Gastrocnemius medialis (tissue), 4 donors: ENCODE measurements at regions of chr10 and their contacts with region 1.

Region 1: DNA sequence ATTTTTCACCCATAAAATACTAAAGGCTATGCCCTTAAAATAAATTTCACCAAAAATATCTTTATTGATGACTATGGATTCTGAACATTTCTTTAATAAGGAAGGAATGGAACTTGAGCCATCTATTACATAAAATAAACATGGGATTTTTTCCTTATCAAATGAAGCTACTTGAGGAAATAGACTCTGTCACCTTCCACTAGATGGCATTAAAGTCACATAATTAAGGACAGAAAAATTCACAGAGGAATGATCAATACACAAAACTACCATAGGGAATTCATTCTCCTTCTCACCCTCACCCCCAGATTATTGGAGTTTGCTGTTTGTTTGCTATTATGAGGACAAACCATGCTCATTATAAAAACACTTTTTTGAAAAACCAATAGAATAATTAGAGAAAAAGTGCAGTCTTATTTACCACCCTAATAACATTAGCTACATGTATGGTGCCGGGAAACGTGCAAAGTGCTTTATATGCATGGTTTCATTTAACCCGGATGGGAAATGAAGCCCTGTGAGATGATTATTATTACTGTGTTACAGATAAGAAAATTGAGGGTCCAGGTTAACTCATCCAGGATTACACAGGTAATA is 21.1 kb upstream of the FOXI2 start:
- DNase-seq: no peak
- ATAC-seq: no peak
- H3K4me3 ChIP-seq: no peak overlapping the region
- H3K27ac ChIP-seq: no peak overlapping the region
- H3K4me1 ChIP-seq: no peaks in the 10 kb centered on the region
- H3K27me3 ChIP-seq: no peaks in the 10 kb centered on the region
- CTCF ChIP-seq: peak in 3 of 5 experiments; percentile 2 to 24 (median 22)
- POLR2A ChIP-seq: no peak

Region 2: DNA sequence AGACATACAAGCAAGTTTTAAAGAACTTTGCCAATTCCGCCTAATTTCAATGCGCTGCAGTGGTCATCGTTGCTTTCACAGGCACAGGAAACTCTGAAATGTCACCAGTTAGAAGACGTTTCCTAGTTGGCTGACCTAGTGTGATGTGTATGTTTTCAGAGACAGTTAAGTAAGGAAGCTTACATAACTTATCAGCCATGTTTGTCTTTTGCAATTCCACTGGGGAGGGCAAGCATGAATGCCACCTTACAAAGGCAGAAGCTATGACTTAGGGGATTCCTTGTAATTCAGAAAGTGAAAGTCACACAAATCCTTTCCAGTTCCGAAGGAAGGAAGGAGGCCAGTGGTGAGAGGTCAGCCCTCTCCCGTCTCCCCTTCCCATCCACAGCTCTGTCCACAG is 181.8 kb before region 1 on chr10:
- in situ Hi-C with region 1: no loop called
- intact Hi-C with region 1: no loop called
- DNase-seq: no peak
- ATAC-seq: no peak
- H3K4me3 ChIP-seq: no peak overlapping the region
- H3K27ac ChIP-seq: no peak overlapping the region
- H3K4me1 ChIP-seq: no peaks in the 10 kb centered on the region
- H3K27me3 ChIP-seq: no peaks in the 10 kb centered on the region
- CTCF ChIP-seq: no peak
- POLR2A ChIP-seq: no peak

Region 3: GRCh38 chr10:127853868-127854768 is 138.2 kb after region 1 on chr10:
- in situ Hi-C with region 1: no loop called
- intact Hi-C with region 1: loop called (anchors 5 kb)
- DNase-seq: no peak
- ATAC-seq: peak; percentile 60 to 62
- H3K4me3 ChIP-seq: no peak overlapping the region
- H3K27ac ChIP-seq: no peak overlapping the region
- H3K4me1 ChIP-seq: no peaks in the 10 kb centered on the region
- H3K27me3 ChIP-seq: no peaks in the 10 kb centered on the region
- CTCF ChIP-seq: peak; percentile 50 to 82 (median 68)
- POLR2A ChIP-seq: no peak